MCF 10A (cell line): ENCODE measurements at regions of chr5 and their contacts with region 1.

Region 1: DNA sequence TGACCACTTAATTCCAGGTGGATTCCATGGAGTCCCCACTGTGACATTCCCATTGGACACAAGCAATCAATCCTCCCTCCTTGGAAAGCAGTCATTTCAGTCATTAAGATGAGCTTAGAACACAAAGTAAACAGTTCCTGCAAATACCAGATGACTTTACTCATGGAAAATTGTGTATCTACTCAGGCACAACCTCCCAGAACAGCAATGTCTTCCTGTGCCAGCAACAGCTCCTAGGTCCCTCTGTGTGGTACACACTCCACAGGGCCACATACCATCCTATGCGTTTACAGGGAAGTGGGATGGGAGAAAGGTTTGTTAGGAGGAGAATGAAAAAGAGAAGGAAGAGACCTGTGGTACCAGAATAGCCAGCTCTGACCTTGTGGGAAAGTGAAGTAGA is 53.7 kb downstream of the MTMR12 start:
- DNase-seq: no peak
- H3K4me3 Mint-ChIP-seq: no peak overlapping the region
- H3K27ac Mint-ChIP-seq: no peak overlapping the region
- H3K4me1 Mint-ChIP-seq: peaks cover 6% of the 10 kb centered on the region
- H3K27me3 Mint-ChIP-seq: no peaks in the 10 kb centered on the region
- CTCF ChIP-seq: no peak

Region 2: DNA sequence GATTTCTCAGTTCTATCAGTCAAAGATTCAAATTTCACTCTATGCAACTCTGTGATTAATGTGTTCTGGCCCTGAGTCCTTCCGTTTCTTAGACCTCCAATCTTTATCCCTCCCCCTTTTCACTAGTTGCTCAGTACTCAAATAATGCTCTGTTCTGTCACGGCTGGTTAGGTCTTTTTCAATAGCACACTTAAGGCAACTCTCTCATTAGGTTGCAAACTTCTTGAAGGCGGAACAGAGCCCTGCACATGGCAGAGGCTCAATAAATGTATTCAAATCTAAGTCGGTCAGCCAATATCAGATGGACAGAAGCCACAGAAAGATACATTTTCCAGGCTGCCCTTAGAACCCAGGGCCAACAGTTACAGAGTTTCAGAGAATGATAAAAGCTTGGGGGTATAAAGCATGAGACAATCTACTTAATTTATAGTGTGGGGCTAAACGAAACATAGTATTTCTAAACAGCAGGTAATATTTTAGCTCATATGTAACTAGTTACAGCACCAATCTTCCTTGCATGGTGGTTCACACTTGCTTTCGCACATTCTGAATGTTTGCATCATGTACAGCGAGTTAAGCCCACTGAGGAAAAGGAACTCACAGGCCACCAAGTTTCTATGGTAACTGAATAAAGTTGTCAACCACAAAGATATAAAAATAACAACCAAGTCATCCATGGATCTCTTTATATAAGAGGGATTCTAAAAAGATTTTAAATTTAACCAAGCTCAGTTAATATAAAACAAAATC is 17.8 kb before region 1 on chr5:
- CTCF ChIA-PET with region 1: interaction called, 12 read pairs
- POLR2A ChIA-PET with region 1: no interaction called
- intact Hi-C with region 1: no loop called
- DNase-seq: no peak
- H3K4me3 Mint-ChIP-seq: no peak overlapping the region
- H3K27ac Mint-ChIP-seq: no peak overlapping the region
- H3K4me1 Mint-ChIP-seq: no peaks in the 10 kb centered on the region
- H3K27me3 Mint-ChIP-seq: no peaks in the 10 kb centered on the region
- CTCF ChIP-seq: no peak